ENCODE measurements at regions of chr6 and their contacts with region 1.

Region 1: GRCh38 chr6:33967966-33968724 is 164.3 kb upstream of the MLN start:
- DNase-seq: peak; percentile 47
- ATAC-seq: peak; percentile 96
- H3K4me3 ChIP-seq: no peak overlapping the region
- H3K27ac ChIP-seq: no peak overlapping the region
- H3K4me1 ChIP-seq: no peaks in the 10 kb centered on the region
- H3K27me3 ChIP-seq: peaks cover 0 to 25% of the 10 kb centered on the region in 2 experiments; a peak in 2 of 5 replicates
- CTCF ChIP-seq: peak; percentile 80
- EP300 ChIP-seq: no peak
- POLR2A ChIP-seq: no peak
- RAD21 ChIP-seq: peak; percentile 84

Region 2: GRCh38 chr6:33929575-33930288 is 38.4 kb before region 1 on chr6:
- CTCF ChIA-PET with region 1: no interaction called
- POLR2A ChIA-PET with region 1: no interaction called
- in situ Hi-C with region 1: no loop called
- intact Hi-C with region 1: loop called (anchors 5 kb)
- DNase-seq: no peak
- ATAC-seq: no peak
- H3K4me3 ChIP-seq: no peak overlapping the region
- H3K27ac ChIP-seq: no peak overlapping the region
- H3K4me1 ChIP-seq: no peaks in the 10 kb centered on the region
- H3K27me3 ChIP-seq: peaks cover 0 to 26% of the 10 kb centered on the region in 2 experiments; a peak in 4 of 5 replicates
- CTCF ChIP-seq: no peak
- EP300 ChIP-seq: no peak
- POLR2A ChIP-seq: no peak
- RAD21 ChIP-seq: no peak

Region 3: GRCh38 chr6:33988121-33989015 is 20.2 kb after region 1 on chr6:
- CTCF ChIA-PET with region 1: no interaction called
- POLR2A ChIA-PET with region 1: no interaction called
- in situ Hi-C with region 1: no loop called
- intact Hi-C with region 1: loop called (anchors 2 kb)
- DNase-seq: peak; percentile 96
- ATAC-seq: peak; percentile 95
- H3K4me3 ChIP-seq: peak overlapping the region in 1 of 3 experiments; percentile 42; a peak in 1 of 6 replicates
- H3K27ac ChIP-seq: no peak overlapping the region
- H3K4me1 ChIP-seq: peaks cover 28% of the 10 kb centered on the region
- H3K27me3 ChIP-seq: peaks cover 17 to 85% of the 10 kb centered on the region in 2 experiments; a peak in 4 of 5 replicates
- CTCF ChIP-seq: peak; percentile 71
- EP300 ChIP-seq: peak; percentile 55 to 93; a peak in 3 of 4 replicates
- POLR2A ChIP-seq: no peak
- RAD21 ChIP-seq: peak; percentile 72

Region 4: GRCh38 chr6:34027445-34027936 is 59.3 kb after region 1 on chr6:
- CTCF ChIA-PET with region 1: interaction called, 32 read pairs
- POLR2A ChIA-PET with region 1: no interaction called
- in situ Hi-C with region 1: loop called (anchors 5 kb)
- intact Hi-C with region 1: loop called (anchors 1 kb)
- DNase-seq: peak; percentile 30
- ATAC-seq: peak; percentile 83
- H3K4me3 ChIP-seq: no peak overlapping the region
- H3K27ac ChIP-seq: no peak overlapping the region
- H3K4me1 ChIP-seq: no peaks in the 10 kb centered on the region
- H3K27me3 ChIP-seq: peaks cover 18 to 72% of the 10 kb centered on the region in 2 experiments; a peak in 4 of 5 replicates
- CTCF ChIP-seq: peak; percentile 96
- EP300 ChIP-seq: no peak
- POLR2A ChIP-seq: no peak
- RAD21 ChIP-seq: peak; percentile 97

Region 5: DNA sequence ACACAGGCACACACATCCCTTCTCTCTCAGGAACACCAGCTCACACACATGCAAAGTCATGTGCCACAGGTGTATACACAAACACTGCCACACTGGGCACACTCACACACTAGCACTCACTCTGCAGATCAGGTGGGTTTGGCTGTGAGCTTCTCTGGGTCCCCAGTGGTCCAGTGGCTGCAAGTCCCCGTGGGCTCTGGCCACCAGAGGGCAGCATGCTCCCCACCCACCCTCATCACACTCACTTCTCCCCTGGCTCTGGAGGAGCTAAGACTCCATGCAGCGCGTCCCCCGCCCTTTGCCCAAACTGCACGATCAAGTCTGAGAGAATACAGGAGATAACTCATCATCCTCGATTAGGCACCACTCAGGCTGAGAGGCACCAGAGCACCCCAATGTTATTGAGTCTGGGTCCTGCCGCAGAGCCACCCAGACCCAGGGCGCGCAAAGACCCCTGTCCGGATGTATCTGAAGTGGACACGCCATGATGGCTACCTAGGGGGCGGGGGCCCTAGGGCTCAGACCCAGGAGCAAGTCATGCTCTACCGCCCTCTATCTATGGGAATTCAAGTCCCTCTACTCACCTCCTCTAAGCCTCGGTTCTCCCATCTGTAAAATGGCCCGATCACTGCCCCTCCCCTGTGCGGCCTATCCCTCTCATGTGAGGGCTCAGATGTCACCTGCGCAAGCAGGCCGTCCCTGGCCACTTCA is 87.2 kb after region 1 on chr6:
- CTCF ChIA-PET with region 1: no interaction called
- POLR2A ChIA-PET with region 1: no interaction called
- in situ Hi-C with region 1: no loop called
- intact Hi-C with region 1: no loop called
- DNase-seq: peak; percentile 60
- ATAC-seq: peak; percentile 88
- H3K4me3 ChIP-seq: no peak overlapping the region
- H3K27ac ChIP-seq: no peak overlapping the region
- H3K4me1 ChIP-seq: no peaks in the 10 kb centered on the region
- H3K27me3 ChIP-seq: peaks cover 14 to 66% of the 10 kb centered on the region in 2 experiments
- CTCF ChIP-seq: peak; percentile 94
- EP300 ChIP-seq: no peak
- POLR2A ChIP-seq: no peak
- RAD21 ChIP-seq: peak; percentile 73

Measured in HepG2 (cell line).